Endothelial cell of umbilical vein (primary cell): ENCODE measurements at regions of chr1 and their contacts with region 1.

Region 1: DNA sequence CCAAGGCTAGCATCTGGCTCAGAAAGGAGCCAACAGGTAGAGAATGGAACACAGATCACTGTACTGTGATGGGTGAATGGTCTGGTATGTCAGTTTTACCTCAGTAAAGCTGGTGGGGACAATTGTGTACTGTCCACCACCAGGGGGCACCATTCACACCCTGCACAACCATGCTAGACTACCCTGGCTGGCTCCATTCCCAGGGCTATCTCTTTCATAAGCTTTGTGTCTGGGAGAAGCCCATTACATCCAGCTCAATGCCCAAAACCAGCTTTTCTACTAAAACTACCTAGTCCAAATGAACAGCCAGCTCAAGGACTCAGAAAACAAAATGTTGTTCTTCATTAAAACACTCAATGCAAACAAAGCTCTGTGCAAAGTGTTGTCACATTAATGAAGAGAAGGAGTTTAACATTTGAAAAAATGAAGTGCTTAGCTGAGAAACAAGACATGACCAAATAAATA is 62.0 kb upstream of the RASAL2 start:
- DNase-seq: peak; percentile 84
- H3K4me3 ChIP-seq: no peak overlapping the region
- H3K27ac ChIP-seq: no peak overlapping the region
- H3K4me1 ChIP-seq: peaks cover 7% of the 10 kb centered on the region
- H3K27me3 ChIP-seq: no peaks in the 10 kb centered on the region
- CTCF ChIP-seq: peak; percentile 80 to 84
- POLR2A ChIP-seq: no peak

Region 2: GRCh38 chr1:176897350-176898236 is 1134.3 kb before region 1 on chr1:
- CTCF ChIA-PET with region 1: interaction called, 10 read pairs
- POLR2A ChIA-PET with region 1: no interaction called
- dilution Hi-C with region 1: no loop called
- intact Hi-C with region 1: no loop called
- DNase-seq: peak; percentile 49
- H3K4me3 ChIP-seq: peak overlapping the region in 1 of 3 experiments; percentile 37
- H3K27ac ChIP-seq: no peak overlapping the region
- H3K4me1 ChIP-seq: peaks cover 4% of the 10 kb centered on the region
- H3K27me3 ChIP-seq: no peaks in the 10 kb centered on the region
- CTCF ChIP-seq: peak; percentile 79 to 89
- POLR2A ChIP-seq: no peak

Region 3: DNA sequence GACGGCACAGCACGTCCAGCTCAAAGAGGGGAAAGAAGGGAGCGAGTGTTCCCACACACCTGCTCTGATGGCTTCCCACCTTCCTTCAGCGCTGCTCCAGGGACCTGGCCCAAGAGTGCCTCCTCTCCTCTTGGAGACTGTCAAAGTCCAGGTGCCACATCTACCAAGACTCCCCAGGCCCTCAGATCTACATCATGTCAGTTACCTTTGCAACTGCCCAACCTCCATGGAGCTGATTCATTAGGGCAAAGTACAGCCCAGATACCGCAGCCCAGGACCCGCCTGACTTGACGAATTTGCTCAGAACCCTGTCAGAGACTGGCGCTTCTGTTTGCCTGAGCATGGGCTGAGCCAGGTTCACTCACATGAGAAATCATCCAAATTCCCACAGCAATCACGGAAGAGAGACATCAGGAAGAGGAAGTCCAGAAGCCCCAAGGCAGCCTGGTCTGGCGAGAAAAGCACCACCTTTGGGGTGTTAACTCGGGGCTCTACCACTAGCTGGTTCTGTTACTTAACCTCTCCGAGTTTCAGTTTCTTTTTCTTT is 62.0 kb before region 1 on chr1 and contains the start of gene SEC16B:
- CTCF ChIA-PET with region 1: no interaction called
- POLR2A ChIA-PET with region 1: no interaction called
- dilution Hi-C with region 1: no loop called
- intact Hi-C with region 1: no loop called
- DNase-seq: no peak
- H3K4me3 ChIP-seq: no peak within 1 kb of the TSS
- H3K27ac ChIP-seq: no peak within 1 kb of the TSS
- H3K4me1 ChIP-seq: no peaks in the 10 kb centered on the region
- H3K27me3 ChIP-seq: no peaks in the 10 kb centered on the region
- CTCF ChIP-seq: no peak
- POLR2A ChIP-seq: no peak
- total RNA-seq, gene SEC16B: 0.44 and 0.78 TPM in 2 replicates

Region 4: GRCh38 chr1:178052650-178053461 is 21.0 kb after region 1 on chr1:
- CTCF ChIA-PET with region 1: interaction called, 43 read pairs
- POLR2A ChIA-PET with region 1: no interaction called
- dilution Hi-C with region 1: no loop called
- intact Hi-C with region 1: loop called (anchors 1 kb)
- DNase-seq: peak; percentile 48
- H3K4me3 ChIP-seq: no peak overlapping the region
- H3K27ac ChIP-seq: peak overlapping the region; percentile 66
- H3K4me1 ChIP-seq: peaks cover 43% of the 10 kb centered on the region
- H3K27me3 ChIP-seq: no peaks in the 10 kb centered on the region
- CTCF ChIP-seq: no peak
- POLR2A ChIP-seq: no peak

Region 5: DNA sequence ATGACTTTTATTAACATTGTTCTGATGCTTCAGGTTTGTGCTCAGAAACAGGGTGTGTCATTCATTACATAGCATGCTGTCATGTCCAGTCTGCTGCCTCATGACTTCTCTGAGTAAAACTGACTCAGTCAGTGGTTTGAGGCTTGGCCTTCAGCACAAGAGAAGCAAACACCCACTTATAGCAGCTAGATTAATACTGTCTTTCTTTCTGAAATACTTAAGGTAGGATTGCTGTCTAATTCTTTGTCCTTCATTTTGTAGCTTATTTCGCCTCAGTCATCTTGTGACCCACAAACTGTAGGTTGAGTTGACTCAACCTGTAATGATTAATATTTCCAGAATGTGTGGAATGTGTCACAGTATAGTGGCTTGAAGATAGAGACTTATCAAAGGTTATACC is 94.9 kb after region 1 on chr1:
- CTCF ChIA-PET with region 1: interaction called, 17 read pairs
- POLR2A ChIA-PET with region 1: no interaction called
- dilution Hi-C with region 1: no loop called
- intact Hi-C with region 1: no loop called
- DNase-seq: peak; percentile 69
- H3K4me3 ChIP-seq: no peak overlapping the region
- H3K27ac ChIP-seq: peak overlapping the region; percentile 57
- H3K4me1 ChIP-seq: peaks cover 10% of the 10 kb centered on the region
- H3K27me3 ChIP-seq: no peaks in the 10 kb centered on the region
- CTCF ChIP-seq: no peak
- POLR2A ChIP-seq: no peak

Region 6: GRCh38 chr1:178254433-178254832 is 222.5 kb after region 1 on chr1:
- CTCF ChIA-PET with region 1: interaction called, 10 read pairs
- POLR2A ChIA-PET with region 1: no interaction called
- dilution Hi-C with region 1: no loop called
- intact Hi-C with region 1: no loop called
- DNase-seq: no peak
- H3K4me3 ChIP-seq: no peak overlapping the region
- H3K27ac ChIP-seq: no peak overlapping the region
- H3K4me1 ChIP-seq: peaks cover 12% of the 10 kb centered on the region
- H3K27me3 ChIP-seq: no peaks in the 10 kb centered on the region
- CTCF ChIP-seq: no peak
- POLR2A ChIP-seq: no peak

Region 7: DNA sequence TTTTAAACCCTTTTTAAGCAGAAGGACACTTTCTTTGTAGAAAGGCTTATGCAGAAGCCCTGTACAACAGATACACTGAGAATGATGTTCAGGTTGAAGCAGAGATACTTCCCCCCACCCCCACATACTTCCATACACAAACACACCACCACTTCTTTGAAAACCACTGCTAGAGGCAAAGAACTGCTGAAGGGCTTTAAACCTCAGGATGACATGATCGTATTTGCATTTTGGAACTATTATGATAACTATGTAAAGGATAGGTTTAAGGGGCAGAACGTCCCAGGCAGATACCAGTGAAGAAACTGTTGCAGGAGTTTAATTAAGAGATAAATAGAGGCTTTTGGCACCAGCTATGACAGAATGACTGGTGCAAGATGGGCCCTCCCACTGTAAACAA is 262.3 kb after region 1 on chr1:
- CTCF ChIA-PET with region 1: interaction called, 33 read pairs
- POLR2A ChIA-PET with region 1: no interaction called
- dilution Hi-C with region 1: no loop called
- intact Hi-C with region 1: no loop called
- DNase-seq: no peak
- H3K4me3 ChIP-seq: no peak overlapping the region
- H3K27ac ChIP-seq: no peak overlapping the region
- H3K4me1 ChIP-seq: no peaks in the 10 kb centered on the region
- H3K27me3 ChIP-seq: no peaks in the 10 kb centered on the region
- CTCF ChIP-seq: no peak
- POLR2A ChIP-seq: no peak